A673 (cell line): ENCODE measurements at regions of chr5 and their contacts with region 1.

Region 1: DNA sequence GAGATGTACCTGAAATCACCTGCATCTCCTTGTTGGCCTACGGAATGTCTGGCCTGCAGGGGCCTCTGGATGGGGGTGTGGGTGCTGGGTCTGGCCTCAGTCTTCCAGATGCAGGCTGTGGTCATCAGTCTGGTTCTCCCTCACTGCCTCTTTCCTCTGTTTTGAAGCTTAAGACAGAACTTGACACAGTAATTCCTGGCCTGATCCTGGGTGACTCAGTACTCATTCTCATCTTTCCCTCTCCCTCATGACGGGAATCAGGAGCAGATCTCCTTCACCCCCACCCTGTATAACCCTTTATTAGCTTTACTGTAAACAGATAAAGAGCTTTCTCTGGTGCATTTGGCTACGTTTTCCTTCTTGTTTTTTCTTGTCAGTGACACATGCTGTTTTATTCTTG is 89.3 kb upstream of the ADAMTS16 start:
- DNase-seq: no peak
- H3K4me3 ChIP-seq: no peak overlapping the region
- H3K27ac ChIP-seq: no peak overlapping the region
- H3K4me1 ChIP-seq: no peaks in the 10 kb centered on the region
- H3K27me3 ChIP-seq: peaks cover 56% of the 10 kb centered on the region
- CTCF ChIP-seq: no peak

Region 2: GRCh38 chr5:5473224-5473623 is 422.4 kb after region 1 on chr5:
- CTCF ChIA-PET with region 1: no interaction called
- POLR2A ChIA-PET with region 1: no interaction called
- intact Hi-C with region 1: no loop called
- DNase-seq: no peak
- H3K4me3 ChIP-seq: no peak overlapping the region
- H3K27ac ChIP-seq: no peak overlapping the region
- H3K4me1 ChIP-seq: no peaks in the 10 kb centered on the region
- H3K27me3 ChIP-seq: no peaks in the 10 kb centered on the region
- CTCF ChIP-seq: no peak

Region 3: GRCh38 chr5:5492087-5492933 is 441.5 kb after region 1 on chr5:
- CTCF ChIA-PET with region 1: no interaction called
- POLR2A ChIA-PET with region 1: no interaction called
- intact Hi-C with region 1: no loop called
- DNase-seq: peak; percentile 80
- H3K4me3 ChIP-seq: no peak overlapping the region
- H3K27ac ChIP-seq: no peak overlapping the region
- H3K4me1 ChIP-seq: peaks cover 3% of the 10 kb centered on the region
- H3K27me3 ChIP-seq: peaks cover 6% of the 10 kb centered on the region
- CTCF ChIP-seq: peak; percentile 82

Region 4: DNA sequence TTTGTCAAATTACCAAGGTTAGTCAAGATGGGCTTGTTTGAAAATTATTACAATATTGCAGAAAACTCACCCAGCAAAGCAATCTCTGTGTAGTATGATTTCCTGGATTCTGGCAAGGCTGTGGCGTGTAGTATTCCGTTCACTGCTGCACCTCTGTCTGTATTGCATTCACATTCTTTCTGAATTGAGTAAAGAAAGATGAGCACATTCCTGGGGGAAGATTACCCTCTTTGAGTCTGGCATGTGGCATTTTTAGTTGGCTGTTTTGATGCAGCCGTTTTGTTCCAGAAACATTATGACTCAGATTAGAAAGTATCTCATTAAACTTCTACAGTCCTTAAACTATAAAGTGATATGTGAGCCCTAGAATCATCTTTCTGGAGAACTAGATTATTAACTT is 1860.1 kb after region 1 on chr5:
- CTCF ChIA-PET with region 1: no interaction called
- POLR2A ChIA-PET with region 1: interaction called, 10 read pairs
- intact Hi-C with region 1: no loop called
- DNase-seq: no peak
- H3K4me3 ChIP-seq: no peak overlapping the region
- H3K27ac ChIP-seq: no peak overlapping the region
- H3K4me1 ChIP-seq: no peaks in the 10 kb centered on the region
- H3K27me3 ChIP-seq: peaks cover 64% of the 10 kb centered on the region
- CTCF ChIP-seq: no peak